Stomach (tissue), 19 donors: ENCODE measurements at regions of chr15 and their contacts with region 1.

Region 1: GRCh38 chr15:96774216-96774615 is 443.7 kb downstream of the NR2F2 start:
- DNase-seq: no peak
- H3K4me3 ChIP-seq: no peak overlapping the region
- H3K27ac ChIP-seq: no peak overlapping the region
- H3K4me1 ChIP-seq: no peaks in the 10 kb centered on the region
- H3K27me3 ChIP-seq: no peaks in the 10 kb centered on the region
- CTCF ChIP-seq: no peak
- EP300 ChIP-seq: no peak
- POLR2A ChIP-seq: no peak

Region 2: GRCh38 chr15:95973566-95974256 is 800.5 kb before region 1 on chr15:
- intact Hi-C with region 1: no loop called
- DNase-seq: no peak
- H3K4me3 ChIP-seq: no peak overlapping the region
- H3K27ac ChIP-seq: no peak overlapping the region
- H3K4me1 ChIP-seq: peaks cover 0 to 7% (median 0%) of the 10 kb centered on the region in 4 donors
- H3K27me3 ChIP-seq: no peaks in the 10 kb centered on the region
- CTCF ChIP-seq: no peak
- EP300 ChIP-seq: no peak
- POLR2A ChIP-seq: no peak

Region 3: DNA sequence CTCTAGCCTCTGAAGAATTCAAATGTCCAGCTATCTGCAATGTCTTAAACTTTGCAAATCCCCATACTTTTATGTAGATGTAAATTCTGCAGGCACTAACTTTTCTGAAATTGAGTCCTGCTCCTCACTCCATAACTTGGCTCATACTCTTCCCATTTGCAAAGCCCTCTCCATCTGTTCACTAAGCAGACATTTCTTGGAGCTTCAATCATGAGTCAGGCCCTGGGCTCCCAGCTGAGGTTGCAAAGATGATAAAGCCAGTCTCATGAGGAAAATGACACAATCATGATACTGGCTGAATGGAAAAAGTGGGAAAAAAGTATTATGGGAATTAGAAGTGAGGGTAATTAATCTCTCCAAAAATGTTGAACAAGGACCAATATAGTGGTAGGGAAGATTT is 63.9 kb after region 1 on chr15:
- intact Hi-C with region 1: loop called (anchors 10 kb)
- DNase-seq: no peak
- H3K4me3 ChIP-seq: no peak overlapping the region
- H3K27ac ChIP-seq: no peak overlapping the region
- H3K4me1 ChIP-seq: no peaks in the 10 kb centered on the region
- H3K27me3 ChIP-seq: no peaks in the 10 kb centered on the region
- CTCF ChIP-seq: no peak
- EP300 ChIP-seq: no peak
- POLR2A ChIP-seq: no peak

Region 4: GRCh38 chr15:96851613-96852012 is 77.4 kb after region 1 on chr15:
- intact Hi-C with region 1: no loop called
- DNase-seq: no peak
- H3K4me3 ChIP-seq: no peak overlapping the region
- H3K27ac ChIP-seq: no peak overlapping the region
- H3K4me1 ChIP-seq: no peaks in the 10 kb centered on the region
- H3K27me3 ChIP-seq: no peaks in the 10 kb centered on the region
- CTCF ChIP-seq: no peak
- EP300 ChIP-seq: no peak
- POLR2A ChIP-seq: no peak

Region 5: GRCh38 chr15:96870580-96870979 is 96.4 kb after region 1 on chr15:
- intact Hi-C with region 1: no loop called
- DNase-seq: no peak
- H3K4me3 ChIP-seq: no peak overlapping the region
- H3K27ac ChIP-seq: no peak overlapping the region
- H3K4me1 ChIP-seq: no peaks in the 10 kb centered on the region
- H3K27me3 ChIP-seq: no peaks in the 10 kb centered on the region
- CTCF ChIP-seq: no peak
- EP300 ChIP-seq: no peak
- POLR2A ChIP-seq: no peak